Natural killer cell (primary cell): ENCODE measurements at regions of chr1 and their contacts with region 1.

Region 1: GRCh38 chr1:10032590-10033358 is at the start of gene UBE4B:
- DNase-seq: peak; percentile 99 to 100
- ATAC-seq: peak; percentile 96 to 100 (median 96)
- H3K4me3 ChIP-seq: peak within 1 kb of the TSS; percentile 91
- H3K4me3 Mint-ChIP-seq: peak within 1 kb of the TSS; percentile 93
- H3K27ac ChIP-seq: peak within 1 kb of the TSS; percentile 88
- H3K27ac Mint-ChIP-seq: peak within 1 kb of the TSS; percentile 83 to 98
- H3K4me1 ChIP-seq: peaks cover 11% of the 10 kb centered on the region
- H3K4me1 Mint-ChIP-seq: peaks cover 24% of the 10 kb centered on the region in 2 donors
- H3K27me3 ChIP-seq: no peaks in the 10 kb centered on the region
- H3K27me3 Mint-ChIP-seq: no peaks in the 10 kb centered on the region
- CTCF ChIP-seq: peak; percentile 79
- total RNA-seq, gene UBE4B: 37.0 to 48.0 (median 41.4) TPM

Region 2: GRCh38 chr1:9874959-9875635 is 157.7 kb before region 1 on chr1:
- intact Hi-C with region 1: loop called (anchors 1 kb)
- DNase-seq: peak; percentile 63 to 89
- ATAC-seq: peak; percentile 82 to 99 (median 98)
- H3K4me3 ChIP-seq: no peak overlapping the region
- H3K4me3 Mint-ChIP-seq: no peak overlapping the region
- H3K27ac ChIP-seq: no peak overlapping the region
- H3K27ac Mint-ChIP-seq: no peak overlapping the region
- H3K4me1 ChIP-seq: peaks cover 8% of the 10 kb centered on the region
- H3K4me1 Mint-ChIP-seq: peaks cover 10 to 12% of the 10 kb centered on the region in 2 donors
- H3K27me3 ChIP-seq: no peaks in the 10 kb centered on the region
- H3K27me3 Mint-ChIP-seq: no peaks in the 10 kb centered on the region
- CTCF ChIP-seq: peak; percentile 93

Region 3: DNA sequence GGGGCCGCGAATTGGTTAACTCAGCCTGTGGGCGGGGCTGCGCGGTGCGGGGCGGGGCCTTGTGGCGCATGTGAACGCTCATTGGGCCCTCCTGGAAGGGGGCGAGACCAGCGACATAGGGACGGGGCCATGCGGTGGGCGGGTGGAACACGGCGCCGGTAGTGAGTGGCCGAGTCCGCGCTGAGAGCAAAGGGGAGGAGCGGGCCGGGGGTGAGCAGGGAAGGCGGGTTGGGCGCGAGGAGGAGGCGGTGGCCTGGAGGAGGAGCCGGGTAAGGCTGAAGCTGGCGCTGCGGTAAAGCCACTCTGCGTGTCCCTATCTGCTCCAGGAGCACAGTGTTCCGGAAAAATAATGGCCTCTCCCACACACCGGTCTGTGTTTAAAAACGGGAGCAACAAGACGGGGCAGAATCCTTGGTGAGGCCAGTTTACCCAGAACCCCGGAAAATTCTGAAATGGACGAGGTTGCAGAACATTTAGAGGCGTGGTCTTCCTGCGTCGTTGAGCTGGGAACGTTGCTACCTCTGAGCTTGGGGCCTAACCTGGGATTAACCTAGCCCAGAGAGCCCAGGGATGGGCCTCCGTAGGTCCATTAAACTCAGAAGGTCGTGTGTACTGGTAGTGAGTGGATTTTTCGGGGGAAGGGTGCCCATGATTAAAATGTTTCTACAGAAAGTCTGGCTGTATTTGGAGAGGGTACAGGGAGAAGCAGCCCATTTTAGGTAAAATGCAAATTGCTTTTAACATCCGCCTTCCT is 122.2 kb before region 1 on chr1:
- intact Hi-C with region 1: loop called (anchors 1 kb)
- DNase-seq: peak; percentile 99 to 100
- ATAC-seq: peak; percentile 86 to 97 (median 88)
- H3K4me3 ChIP-seq: peak overlapping the region; percentile 87
- H3K4me3 Mint-ChIP-seq: peak overlapping the region; percentile 92
- H3K27ac ChIP-seq: peak overlapping the region; percentile 80
- H3K27ac Mint-ChIP-seq: peak overlapping the region; percentile 91 to 93
- H3K4me1 ChIP-seq: peaks cover 22% of the 10 kb centered on the region
- H3K4me1 Mint-ChIP-seq: peaks cover 35 to 46% of the 10 kb centered on the region in 2 donors
- H3K27me3 ChIP-seq: no peaks in the 10 kb centered on the region
- H3K27me3 Mint-ChIP-seq: no peaks in the 10 kb centered on the region
- CTCF ChIP-seq: no peak